Activated CD4-positive, alpha-beta T cell treated with anti-CD3 and anti-CD28 coated beads, Interleukin-2, amount 10 ng/mL, durations not matched to agents 24 days and 14 days (primary cell): ENCODE measurements at regions of chr4 and their contacts with region 1.

Region 1: GRCh38 chr4:6783053-6783981 is 790 bp downstream of the KIAA0232 start:
- DNase-seq: peak; percentile 96
- H3K4me3 Mint-ChIP-seq: peak overlapping the region; percentile 88
- H3K27ac Mint-ChIP-seq: peak overlapping the region; percentile 75
- H3K4me1 Mint-ChIP-seq: peaks cover 43% of the 10 kb centered on the region
- H3K27me3 Mint-ChIP-seq: no peaks in the 10 kb centered on the region

Region 2: GRCh38 chr4:6716018-6716911 is 67.1 kb before region 1 on chr4 and contains the start of gene BLOC1S4:
- intact Hi-C with region 1: loop called (anchors 1 kb)
- DNase-seq: peak; percentile 97
- H3K4me3 Mint-ChIP-seq: peak within 1 kb of the TSS; percentile 98
- H3K27ac Mint-ChIP-seq: peak within 1 kb of the TSS; percentile 99
- H3K4me1 Mint-ChIP-seq: peaks cover 23% of the 10 kb centered on the region
- H3K27me3 Mint-ChIP-seq: peaks cover 3% of the 10 kb centered on the region
- total RNA-seq, gene BLOC1S4: 20.1 and 21.4 TPM in 2 replicates

Region 3: DNA sequence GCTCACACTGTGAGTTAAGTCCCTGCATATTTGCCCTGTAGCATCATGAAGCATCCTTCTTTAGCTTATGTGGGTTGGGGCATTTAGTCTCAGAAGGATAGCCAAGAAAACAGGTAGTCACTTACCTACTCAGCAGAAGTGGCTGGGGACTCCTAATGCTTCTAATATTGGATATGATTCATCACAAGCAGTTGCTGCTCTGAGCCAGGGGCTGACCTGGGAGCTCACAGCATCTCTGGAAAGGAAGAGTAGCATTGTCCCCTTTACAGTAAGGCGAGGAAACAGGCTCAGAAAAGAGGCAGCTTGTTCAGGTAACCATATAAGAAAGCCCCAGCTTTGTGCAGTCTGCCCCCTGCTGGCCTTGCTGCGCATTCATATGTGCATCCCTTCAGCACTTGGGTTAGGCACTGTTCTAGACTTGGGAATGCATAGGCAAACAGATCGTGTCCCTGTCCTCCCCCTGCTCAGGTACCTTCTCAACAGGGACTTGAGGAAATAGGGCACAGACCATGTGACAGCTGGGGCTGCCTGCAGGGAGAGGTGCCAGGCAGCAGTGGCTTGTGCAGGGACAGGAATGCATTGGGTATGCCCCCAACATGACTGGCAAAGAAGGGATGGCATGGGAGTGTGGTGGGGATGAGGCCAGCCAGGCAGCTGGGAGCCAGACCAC is 90.6 kb after region 1 on chr4:
- intact Hi-C with region 1: loop called (anchors 5 kb)
- DNase-seq: peak; percentile 93
- H3K4me3 Mint-ChIP-seq: no peak overlapping the region
- H3K27ac Mint-ChIP-seq: no peak overlapping the region
- H3K4me1 Mint-ChIP-seq: peaks cover 4% of the 10 kb centered on the region
- H3K27me3 Mint-ChIP-seq: no peaks in the 10 kb centered on the region

Region 4: GRCh38 chr4:6909073-6909965 is 126.0 kb after region 1 on chr4 and contains the start of gene TBC1D14:
- intact Hi-C with region 1: loop called (anchors 1 kb)
- DNase-seq: peak; percentile 95
- H3K4me3 Mint-ChIP-seq: peak within 1 kb of the TSS; percentile 96
- H3K27ac Mint-ChIP-seq: peak within 1 kb of the TSS; percentile 95
- H3K4me1 Mint-ChIP-seq: peaks cover 47% of the 10 kb centered on the region
- H3K27me3 Mint-ChIP-seq: no peaks in the 10 kb centered on the region
- total RNA-seq, gene TBC1D14: 47.2 and 47.3 TPM in 2 replicates

Region 5: DNA sequence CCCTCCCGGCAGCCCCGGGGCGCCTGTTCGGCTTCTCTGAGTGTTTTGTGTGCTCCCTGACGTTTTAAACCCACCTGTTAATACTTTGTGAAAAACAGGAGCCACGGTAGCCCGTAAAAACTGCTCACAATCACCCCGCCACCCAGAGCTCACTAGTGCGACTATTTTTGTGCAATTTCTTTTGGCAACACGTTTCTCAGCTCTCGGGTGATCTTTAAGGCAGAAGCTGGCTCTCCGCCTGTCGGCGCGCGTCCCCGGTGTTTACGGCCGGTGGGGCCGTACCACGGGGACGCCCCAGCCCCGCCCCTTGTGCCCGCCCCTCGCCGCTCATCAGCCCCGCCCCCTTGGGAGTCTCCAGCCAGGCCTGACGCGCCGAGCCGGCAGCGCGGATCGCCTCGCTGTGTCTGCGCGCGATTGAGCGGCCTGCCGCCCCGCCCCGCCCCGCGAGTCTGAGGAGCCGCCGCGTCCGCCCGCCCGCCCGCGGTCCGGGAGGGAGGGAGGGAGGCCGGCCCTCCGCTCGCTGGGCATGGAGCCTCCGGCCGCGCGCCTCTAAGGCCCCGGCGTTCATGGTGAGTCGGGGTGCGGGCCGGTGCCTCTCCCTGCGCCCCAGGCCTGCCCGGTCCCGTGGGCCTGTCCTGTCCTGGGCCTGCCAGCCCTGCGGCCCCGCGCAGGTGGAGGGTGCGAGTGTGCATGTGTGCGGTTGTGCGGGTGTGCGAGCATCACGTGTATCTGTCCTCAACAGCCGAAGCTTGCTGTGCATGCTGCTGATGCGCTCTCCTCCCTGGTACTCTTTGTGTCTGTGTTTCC is 203.7 kb after region 1 on chr4:
- intact Hi-C with region 1: loop called (anchors 1 kb)
- DNase-seq: peak; percentile 98
- H3K4me3 Mint-ChIP-seq: peak overlapping the region; percentile 96
- H3K27ac Mint-ChIP-seq: peak overlapping the region; percentile 95
- H3K4me1 Mint-ChIP-seq: peaks cover 72% of the 10 kb centered on the region
- H3K27me3 Mint-ChIP-seq: no peaks in the 10 kb centered on the region